CD4-positive, alpha-beta T cell (primary cell): ENCODE measurements at regions of chr22 and their contacts with region 1.

Region 1: DNA sequence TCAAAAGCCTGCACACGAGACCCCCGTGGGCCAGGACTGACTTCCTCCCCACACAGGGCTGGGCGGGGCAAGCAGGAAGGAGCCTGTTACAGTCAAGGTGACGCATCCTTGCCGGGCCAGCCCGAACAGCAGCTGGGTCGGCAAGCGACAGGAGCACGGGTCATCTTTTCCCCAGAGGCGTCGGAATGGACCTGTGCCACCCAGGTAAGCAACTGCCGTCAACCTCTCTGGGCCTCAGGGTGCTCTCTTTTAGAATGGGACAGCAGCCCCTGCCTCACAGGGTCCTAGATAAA is at the start of gene CYTH4:
- DNase-seq: peak; percentile 36 to 87 (median 76)
- ATAC-seq: peak; percentile 86
- H3K4me3 ChIP-seq: peak within 1 kb of the TSS; percentile 99
- H3K4me3 Mint-ChIP-seq: peak within 1 kb of the TSS; percentile 97
- H3K27ac ChIP-seq: peak within 1 kb of the TSS; percentile 78 to 90
- H3K27ac Mint-ChIP-seq: peak within 1 kb of the TSS; percentile 96
- H3K4me1 ChIP-seq: peaks cover 50% of the 10 kb centered on the region
- H3K4me1 Mint-ChIP-seq: peaks cover 61% of the 10 kb centered on the region
- H3K27me3 ChIP-seq: no peaks in the 10 kb centered on the region
- H3K27me3 Mint-ChIP-seq: no peaks in the 10 kb centered on the region
- CTCF ChIP-seq: no peak
- total RNA-seq, gene CYTH4: 134 to 138 TPM

Region 2: DNA sequence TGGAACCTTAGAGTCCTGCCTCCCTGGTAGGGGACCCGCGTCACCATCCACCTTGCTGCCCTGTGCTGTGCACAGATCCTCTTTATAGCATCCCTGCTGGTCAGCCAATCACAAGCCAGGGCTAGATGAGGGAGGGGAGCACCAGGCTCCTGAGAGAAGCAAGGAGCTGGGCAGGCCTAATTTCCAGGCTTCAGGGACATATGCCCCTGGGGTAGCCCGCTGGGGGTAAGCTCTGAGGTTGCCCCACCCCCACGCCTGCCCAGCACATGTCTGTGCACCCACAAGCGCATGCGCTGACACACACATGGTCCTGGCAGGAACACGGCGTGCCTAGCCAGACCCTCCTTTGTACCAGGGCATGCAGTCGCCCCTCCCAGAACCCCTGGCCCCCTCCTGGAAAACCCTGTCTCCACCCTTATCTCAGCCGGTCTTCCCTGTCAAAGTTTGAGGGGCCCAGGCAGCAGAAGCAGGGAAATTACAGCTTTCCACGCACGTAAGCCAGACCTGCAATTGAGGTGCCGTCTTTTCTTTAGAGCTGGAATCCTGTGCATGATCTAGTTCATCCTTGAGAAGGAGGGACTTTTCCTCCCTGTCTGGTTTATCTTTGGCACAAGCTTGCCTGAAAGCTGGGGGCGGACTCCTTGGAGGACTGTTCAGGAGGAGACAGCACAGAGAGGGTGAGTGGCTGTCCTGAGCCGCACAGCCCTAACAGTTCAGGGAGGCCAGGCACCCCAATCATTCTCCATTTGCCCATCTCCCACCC is 72.1 kb before region 1 on chr22:
- CTCF ChIA-PET with region 1: no interaction called
- POLR2A ChIA-PET with region 1: no interaction called
- intact Hi-C with region 1: no loop called
- DNase-seq: peak in 3 of 14 experiments; percentile 2 to 33 (median 16)
- ATAC-seq: no peak
- H3K4me3 ChIP-seq: no peak overlapping the region
- H3K4me3 Mint-ChIP-seq: peak overlapping the region; percentile 4
- H3K27ac ChIP-seq: no peak overlapping the region
- H3K27ac Mint-ChIP-seq: peak overlapping the region; percentile 33
- H3K4me1 ChIP-seq: peaks cover 51% of the 10 kb centered on the region
- H3K4me1 Mint-ChIP-seq: peaks cover 58% of the 10 kb centered on the region
- H3K27me3 ChIP-seq: no peaks in the 10 kb centered on the region
- H3K27me3 Mint-ChIP-seq: no peaks in the 10 kb centered on the region
- CTCF ChIP-seq: no peak

Region 3: GRCh38 chr22:37237371-37238268 is 44.7 kb before region 1 on chr22:
- CTCF ChIA-PET with region 1: interaction called, 4 read pairs
- POLR2A ChIA-PET with region 1: interaction called, 27 read pairs
- intact Hi-C with region 1: loop called in 1 of 2 experiments (anchors 2 kb)
- DNase-seq: peak in 5 of 14 experiments; percentile 18 to 46 (median 38)
- ATAC-seq: peak; percentile 13
- H3K4me3 ChIP-seq: peak overlapping the region; percentile 34
- H3K4me3 Mint-ChIP-seq: peak overlapping the region; percentile 95
- H3K27ac ChIP-seq: peak overlapping the region; percentile 73 to 96
- H3K27ac Mint-ChIP-seq: peak overlapping the region; percentile 97
- H3K4me1 ChIP-seq: peaks cover 100% of the 10 kb centered on the region
- H3K4me1 Mint-ChIP-seq: peaks cover 98% of the 10 kb centered on the region
- H3K27me3 ChIP-seq: no peaks in the 10 kb centered on the region
- H3K27me3 Mint-ChIP-seq: no peaks in the 10 kb centered on the region
- CTCF ChIP-seq: no peak

Region 4: DNA sequence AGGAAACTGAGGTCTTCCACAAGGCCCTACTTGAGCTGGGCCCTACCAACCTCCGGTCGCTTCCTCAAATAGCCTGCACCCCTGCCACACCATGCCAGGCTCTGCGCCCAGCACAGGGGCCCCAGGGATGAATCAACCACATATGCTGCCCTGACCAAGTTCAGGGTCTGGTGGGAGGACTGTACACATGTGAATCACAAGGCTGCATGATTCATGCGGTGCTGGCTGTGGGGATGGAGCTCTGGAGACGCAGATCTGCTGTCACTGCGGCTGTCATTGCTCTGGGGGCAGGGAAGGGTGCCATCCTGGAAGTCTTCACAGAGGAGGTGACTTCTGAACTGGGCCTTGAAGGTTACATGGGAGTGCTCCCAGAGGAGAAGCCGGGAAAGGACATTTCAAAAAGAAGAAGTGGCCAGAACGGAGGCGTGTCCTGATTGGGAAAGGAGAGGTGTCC is 21.5 kb after region 1 on chr22:
- CTCF ChIA-PET with region 1: interaction called, 10 read pairs
- POLR2A ChIA-PET with region 1: interaction called, 82 read pairs
- intact Hi-C with region 1: loop called in 1 of 2 experiments (anchors 1 kb)
- DNase-seq: peak in 5 of 14 experiments; percentile 31 to 78 (median 67)
- ATAC-seq: no peak
- H3K4me3 ChIP-seq: no peak overlapping the region
- H3K4me3 Mint-ChIP-seq: peak overlapping the region; percentile 27
- H3K27ac ChIP-seq: peak overlapping the region; percentile 92 to 97
- H3K27ac Mint-ChIP-seq: peak overlapping the region; percentile 95
- H3K4me1 ChIP-seq: peaks cover 100% of the 10 kb centered on the region
- H3K4me1 Mint-ChIP-seq: peaks cover 90% of the 10 kb centered on the region
- H3K27me3 ChIP-seq: no peaks in the 10 kb centered on the region
- H3K27me3 Mint-ChIP-seq: no peaks in the 10 kb centered on the region
- CTCF ChIP-seq: no peak

Region 5: GRCh38 chr22:37309211-37310074 is 27.1 kb after region 1 on chr22:
- CTCF ChIA-PET with region 1: interaction called, 4 read pairs
- POLR2A ChIA-PET with region 1: interaction called, 35 read pairs
- intact Hi-C with region 1: loop called in 1 of 2 experiments (anchors 1 kb)
- DNase-seq: peak; percentile 13 to 88 (median 49)
- ATAC-seq: peak; percentile 56
- H3K4me3 ChIP-seq: peak overlapping the region; percentile 30
- H3K4me3 Mint-ChIP-seq: peak overlapping the region; percentile 77
- H3K27ac ChIP-seq: peak overlapping the region; percentile 47 to 81
- H3K27ac Mint-ChIP-seq: peak overlapping the region; percentile 95
- H3K4me1 ChIP-seq: peaks cover 100% of the 10 kb centered on the region
- H3K4me1 Mint-ChIP-seq: peaks cover 86% of the 10 kb centered on the region
- H3K27me3 ChIP-seq: no peaks in the 10 kb centered on the region
- H3K27me3 Mint-ChIP-seq: no peaks in the 10 kb centered on the region
- CTCF ChIP-seq: no peak